HCT116 (cell line): ENCODE measurements at regions of chr15 and their contacts with region 1.

Region 1: GRCh38 chr15:74906446-74907162 is at the start of gene FAM219B:
- DNase-seq: peak; percentile 65
- ATAC-seq: peak; percentile 90
- H3K4me3 ChIP-seq: peak within 1 kb of the TSS; percentile 73 to 96
- H3K27ac ChIP-seq: peak within 1 kb of the TSS; percentile 89
- H3K4me1 ChIP-seq: peaks cover 10 to 17% of the 10 kb centered on the region in 2 experiments; a peak in 2 of 4 replicates
- H3K27me3 ChIP-seq: no peaks in the 10 kb centered on the region
- CTCF ChIP-seq: no peak
- POLR2A ChIP-seq: peak; percentile 89
- RAD21 ChIP-seq: no peak
- total RNA-seq, gene FAM219B: 64.3 TPM

Region 2: DNA sequence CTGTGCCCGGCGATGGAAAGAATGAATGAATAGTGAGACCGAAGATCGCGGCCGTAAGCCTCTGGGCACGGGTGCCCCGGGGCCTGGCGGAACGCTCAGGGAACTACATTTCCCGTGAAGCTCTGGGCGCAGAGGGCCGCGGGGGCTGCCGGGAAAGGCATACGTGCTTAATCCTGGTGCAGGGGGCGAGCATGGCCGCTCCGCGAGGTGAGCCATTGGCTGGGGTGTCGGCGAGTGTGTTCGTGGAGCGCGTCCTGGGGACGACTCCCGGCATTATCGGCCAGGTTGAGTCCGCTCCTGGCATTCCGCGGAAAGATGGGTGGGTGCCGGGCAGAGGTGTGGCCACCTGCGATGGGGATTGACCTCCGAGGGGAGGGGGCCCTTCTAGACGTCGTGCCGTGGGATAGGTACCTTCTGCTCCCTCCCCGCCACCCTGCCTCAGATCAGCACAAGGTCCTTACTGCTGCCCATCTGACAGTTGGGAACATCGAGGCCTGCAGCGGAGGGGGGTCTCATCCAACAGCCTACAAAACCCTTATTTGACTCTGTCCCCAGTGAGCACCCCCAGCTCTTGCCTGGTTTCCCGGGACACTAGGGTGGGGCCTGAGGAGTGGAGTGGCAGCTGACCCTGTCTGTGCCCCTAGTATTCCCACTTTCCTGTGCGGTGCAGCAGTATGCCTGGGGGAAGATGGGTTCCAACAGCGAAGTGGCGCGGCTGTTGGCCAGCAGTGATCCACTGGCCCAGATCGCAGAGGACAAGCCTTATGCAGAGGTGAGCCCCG is 16.5 kb before region 1 on chr15 and contains the start of gene MPI:
- CTCF ChIA-PET with region 1: interaction called, 17 read pairs
- POLR2A ChIA-PET with region 1: interaction called, 8 read pairs
- RAD21 ChIA-PET with region 1: no interaction called
- intact Hi-C with region 1: no loop called
- DNase-seq: peak; percentile 55
- ATAC-seq: peak; percentile 96
- H3K4me3 ChIP-seq: peak within 1 kb of the TSS; percentile 79 to 98
- H3K27ac ChIP-seq: peak within 1 kb of the TSS; percentile 73
- H3K4me1 ChIP-seq: peaks cover 13 to 46% of the 10 kb centered on the region in 2 experiments
- H3K27me3 ChIP-seq: no peaks in the 10 kb centered on the region
- CTCF ChIP-seq: no peak
- POLR2A ChIP-seq: peak; percentile 93
- RAD21 ChIP-seq: no peak; the same call in 1 of the 2 replicates
- total RNA-seq, gene MPI: 49.7 TPM

Region 3: DNA sequence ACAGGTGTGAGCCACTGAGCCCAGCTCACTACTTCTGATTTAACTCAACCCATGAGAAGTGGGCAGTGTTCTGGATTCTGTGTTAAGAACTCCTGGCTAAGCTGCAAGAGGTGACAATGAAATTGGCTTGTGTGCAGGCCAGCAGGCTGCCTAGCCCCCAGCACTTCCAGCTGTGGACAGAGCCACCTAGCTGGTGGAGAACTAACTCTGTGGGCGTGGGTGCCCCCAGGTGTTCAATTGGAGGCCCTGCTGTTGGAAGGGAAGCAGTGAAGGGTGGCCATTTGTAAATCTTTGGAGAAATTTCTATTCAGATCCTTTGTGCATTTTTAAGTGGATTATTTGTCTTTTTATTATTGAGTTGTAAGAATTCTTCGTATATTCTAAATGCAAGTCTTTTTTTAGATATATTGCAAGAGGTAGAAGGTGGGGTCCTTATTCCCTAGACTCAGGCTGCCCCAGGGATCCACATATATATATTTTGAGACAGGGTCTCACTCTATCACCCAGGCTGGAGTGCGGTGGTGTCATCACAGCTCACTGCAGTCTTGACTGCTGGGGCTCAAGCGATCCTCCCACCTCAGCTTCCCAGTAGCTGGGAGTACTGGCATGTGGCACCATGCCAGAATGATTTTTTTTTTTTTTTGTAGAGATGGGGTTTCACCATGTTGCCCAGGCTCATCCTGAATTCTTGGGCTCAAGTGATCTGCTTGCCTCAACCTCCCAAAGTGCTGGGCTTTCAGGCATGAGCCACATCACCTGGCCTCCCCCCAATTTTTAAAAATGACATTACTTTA is 81.6 kb after region 1 on chr15:
- CTCF ChIA-PET with region 1: interaction called, 11 read pairs
- POLR2A ChIA-PET with region 1: no interaction called
- RAD21 ChIA-PET with region 1: no interaction called
- intact Hi-C with region 1: loop called (anchors 5 kb)
- DNase-seq: peak; percentile 41
- ATAC-seq: peak; percentile 99
- H3K4me3 ChIP-seq: no peak overlapping the region
- H3K27ac ChIP-seq: no peak overlapping the region
- H3K4me1 ChIP-seq: peaks cover 10 to 11% of the 10 kb centered on the region in 2 experiments
- H3K27me3 ChIP-seq: 0 out of 2 replicates have a peak, but pooled peaks cover 4% of the 10 kb centered on the region
- CTCF ChIP-seq: peak; percentile 82 to 88 (median 85)
- POLR2A ChIP-seq: no peak
- RAD21 ChIP-seq: peak; percentile 89